T-cell (primary cell): ENCODE measurements at regions of chr3 and their contacts with region 1.

Region 1: GRCh38 chr3:151439652-151440129 is 21.2 kb downstream of the IGSF10 start:
- DNase-seq: peak in 3 of 35 experiments; percentile 3 to 57 (median 5)
- ATAC-seq: no peak
- H3K4me3 ChIP-seq: no peak overlapping the region
- H3K4me3 Mint-ChIP-seq: no peak overlapping the region
- H3K27ac ChIP-seq: no peak overlapping the region
- H3K27ac Mint-ChIP-seq: no peak overlapping the region
- H3K4me1 ChIP-seq: no peaks in the 10 kb centered on the region
- H3K4me1 Mint-ChIP-seq: no peaks in the 10 kb centered on the region
- H3K27me3 ChIP-seq: peaks cover 0 to 3% of the 10 kb centered on the region in 2 experiments
- H3K27me3 Mint-ChIP-seq: peaks cover 0 to 3% of the 10 kb centered on the region in 2 donors

Region 2: GRCh38 chr3:151227266-151227806 is 212.4 kb before region 1 on chr3:
- CTCF ChIA-PET with region 1: no interaction called
- POLR2A ChIA-PET with region 1: no interaction called
- DNase-seq: no peak
- ATAC-seq: peak in 2 of 4 experiments; percentile 25 to 42
- H3K4me3 ChIP-seq: peak overlapping the region in 1 of 2 donors; percentile 38
- H3K4me3 Mint-ChIP-seq: no peak overlapping the region
- H3K27ac ChIP-seq: no peak overlapping the region
- H3K27ac Mint-ChIP-seq: peak overlapping the region; percentile 24 to 68
- H3K4me1 ChIP-seq: peaks cover 19 to 48% of the 10 kb centered on the region in 2 experiments
- H3K4me1 Mint-ChIP-seq: peaks cover 53 to 58% (median 54%) of the 10 kb centered on the region in 3 donors
- H3K27me3 ChIP-seq: no peaks in the 10 kb centered on the region
- H3K27me3 Mint-ChIP-seq: no peaks in the 10 kb centered on the region

Region 3: GRCh38 chr3:151918253-151919029 is 478.8 kb after region 1 on chr3:
- CTCF ChIA-PET with region 1: interaction called, 4 to 10 read pairs
- POLR2A ChIA-PET with region 1: no interaction called
- DNase-seq: peak in 1 of 35 experiments; percentile 62
- ATAC-seq: no peak
- H3K4me3 ChIP-seq: no peak overlapping the region
- H3K4me3 Mint-ChIP-seq: no peak overlapping the region
- H3K27ac ChIP-seq: no peak overlapping the region
- H3K27ac Mint-ChIP-seq: no peak overlapping the region
- H3K4me1 ChIP-seq: no peaks in the 10 kb centered on the region
- H3K4me1 Mint-ChIP-seq: no peaks in the 10 kb centered on the region
- H3K27me3 ChIP-seq: no peaks in the 10 kb centered on the region
- H3K27me3 Mint-ChIP-seq: peaks cover 0 to 4% of the 10 kb centered on the region in 2 donors

Region 4: GRCh38 chr3:152524198-152525140 is 1084.8 kb after region 1 on chr3:
- CTCF ChIA-PET with region 1: interaction called in 1 of 2 experiments, 10 read pairs
- POLR2A ChIA-PET with region 1: no interaction called
- DNase-seq: peak in 19 of 35 experiments; percentile 4 to 69 (median 18)
- ATAC-seq: no peak
- H3K4me3 ChIP-seq: no peak overlapping the region
- H3K4me3 Mint-ChIP-seq: no peak overlapping the region
- H3K27ac ChIP-seq: no peak overlapping the region
- H3K27ac Mint-ChIP-seq: no peak overlapping the region
- H3K4me1 ChIP-seq: no peaks in the 10 kb centered on the region
- H3K4me1 Mint-ChIP-seq: no peaks in the 10 kb centered on the region
- H3K27me3 ChIP-seq: no peaks in the 10 kb centered on the region
- H3K27me3 Mint-ChIP-seq: no peaks in the 10 kb centered on the region